MCF 10A (cell line): ENCODE measurements at regions of chr14 and their contacts with region 1.

Region 1: DNA sequence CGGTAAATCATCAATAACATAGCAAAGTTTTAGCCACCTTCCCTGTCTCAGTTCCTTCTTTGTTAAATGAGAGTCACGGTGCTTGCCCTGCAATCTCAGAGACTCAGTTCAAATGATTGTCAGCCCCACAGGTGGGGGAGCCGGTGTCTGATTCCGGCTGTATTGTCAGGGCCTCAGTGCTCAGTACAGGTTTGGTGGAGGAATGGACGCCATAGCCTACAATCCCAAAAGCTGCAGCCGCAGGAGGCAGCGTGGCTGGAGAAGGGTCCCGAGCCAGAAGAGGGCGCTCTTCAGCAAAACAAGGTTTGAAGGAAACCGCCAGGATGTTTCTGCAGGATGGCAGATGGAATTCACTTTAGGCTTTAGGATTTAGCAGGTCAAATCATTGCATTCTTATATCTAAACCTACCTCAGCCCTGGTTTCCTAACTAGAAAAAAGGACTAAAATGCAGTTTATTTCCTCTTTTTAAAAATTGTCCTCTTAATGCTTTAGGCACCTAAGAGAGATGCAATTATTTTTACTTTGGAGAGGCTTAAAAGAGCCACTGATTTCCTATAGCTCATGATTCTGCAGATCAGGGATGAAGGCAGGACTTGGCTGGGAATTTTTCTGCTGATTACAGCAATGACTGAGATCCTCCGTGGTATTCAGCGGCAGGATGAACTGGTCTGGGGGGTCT is 29.2 kb downstream of the FOS start:
- DNase-seq: peak; percentile 90
- H3K4me3 Mint-ChIP-seq: no peak overlapping the region
- H3K27ac Mint-ChIP-seq: peak overlapping the region; percentile 5
- H3K4me1 Mint-ChIP-seq: peaks cover 32% of the 10 kb centered on the region
- H3K27me3 Mint-ChIP-seq: no peaks in the 10 kb centered on the region
- CTCF ChIP-seq: peak; percentile 85

Region 2: DNA sequence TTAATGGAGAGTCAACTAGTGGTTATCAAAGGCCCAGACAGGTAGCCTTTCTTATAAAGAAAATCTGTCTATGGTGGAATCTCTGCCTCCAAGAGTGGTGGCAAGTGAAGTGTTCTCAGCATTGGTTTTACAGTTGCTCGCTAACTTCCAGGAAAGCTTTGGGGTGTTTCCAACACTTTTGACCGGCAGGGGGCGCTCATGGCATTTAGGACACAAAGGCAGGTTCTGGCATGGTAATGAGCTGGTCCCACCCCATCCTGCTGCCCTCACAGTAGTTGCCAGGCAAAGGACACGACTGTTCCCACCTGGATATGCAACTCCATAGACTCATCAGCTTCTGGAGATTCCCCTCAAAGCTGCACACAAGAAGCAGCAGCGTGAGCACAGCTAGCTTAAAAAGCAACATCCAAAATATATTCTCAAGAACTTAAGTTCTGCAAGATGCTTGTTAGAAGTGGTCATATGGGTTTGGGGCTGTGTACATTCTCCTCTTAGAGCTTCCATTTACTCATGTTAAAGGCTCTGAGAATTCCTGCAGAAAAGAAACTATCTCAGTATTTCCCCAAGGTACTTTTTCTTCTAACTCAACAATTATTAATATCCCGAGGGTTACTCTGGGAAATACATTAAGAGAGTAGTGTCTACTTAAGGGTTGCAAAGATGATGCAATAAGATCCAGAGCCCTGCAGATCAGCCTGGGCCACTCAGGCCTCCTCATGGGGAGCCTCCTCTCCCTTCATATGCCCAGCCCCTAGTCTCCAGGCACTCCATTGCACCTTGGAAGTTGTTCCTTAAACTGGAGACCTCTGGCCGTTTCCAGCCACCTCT is 446.7 kb before region 1 on chr14:
- CTCF ChIA-PET with region 1: interaction called, 3 read pairs
- POLR2A ChIA-PET with region 1: no interaction called
- intact Hi-C with region 1: loop called (anchors 5 kb)
- DNase-seq: peak; percentile 89
- H3K4me3 Mint-ChIP-seq: no peak overlapping the region
- H3K27ac Mint-ChIP-seq: no peak overlapping the region
- H3K4me1 Mint-ChIP-seq: no peaks in the 10 kb centered on the region
- H3K27me3 Mint-ChIP-seq: peaks cover 6% of the 10 kb centered on the region
- CTCF ChIP-seq: peak; percentile 64

Region 3: GRCh38 chr14:74945823-74946682 is 361.8 kb before region 1 on chr14:
- CTCF ChIA-PET with region 1: interaction called, 3 read pairs
- POLR2A ChIA-PET with region 1: no interaction called
- intact Hi-C with region 1: loop called (anchors 10 kb)
- DNase-seq: peak; percentile 78
- H3K4me3 Mint-ChIP-seq: peak overlapping the region; percentile 34
- H3K27ac Mint-ChIP-seq: peak overlapping the region; percentile 52
- H3K4me1 Mint-ChIP-seq: peaks cover 14% of the 10 kb centered on the region
- H3K27me3 Mint-ChIP-seq: no peaks in the 10 kb centered on the region
- CTCF ChIP-seq: peak; percentile 81

Region 4: GRCh38 chr14:75132382-75133086 is 175.3 kb before region 1 on chr14:
- CTCF ChIA-PET with region 1: interaction called, 192 read pairs
- POLR2A ChIA-PET with region 1: interaction called, 274 read pairs
- intact Hi-C with region 1: loop called (anchors 1 kb)
- DNase-seq: peak; percentile 83
- H3K4me3 Mint-ChIP-seq: no peak overlapping the region
- H3K27ac Mint-ChIP-seq: peak overlapping the region; percentile 77
- H3K4me1 Mint-ChIP-seq: peaks cover 33% of the 10 kb centered on the region
- H3K27me3 Mint-ChIP-seq: no peaks in the 10 kb centered on the region
- CTCF ChIP-seq: peak; percentile 67

Region 5: DNA sequence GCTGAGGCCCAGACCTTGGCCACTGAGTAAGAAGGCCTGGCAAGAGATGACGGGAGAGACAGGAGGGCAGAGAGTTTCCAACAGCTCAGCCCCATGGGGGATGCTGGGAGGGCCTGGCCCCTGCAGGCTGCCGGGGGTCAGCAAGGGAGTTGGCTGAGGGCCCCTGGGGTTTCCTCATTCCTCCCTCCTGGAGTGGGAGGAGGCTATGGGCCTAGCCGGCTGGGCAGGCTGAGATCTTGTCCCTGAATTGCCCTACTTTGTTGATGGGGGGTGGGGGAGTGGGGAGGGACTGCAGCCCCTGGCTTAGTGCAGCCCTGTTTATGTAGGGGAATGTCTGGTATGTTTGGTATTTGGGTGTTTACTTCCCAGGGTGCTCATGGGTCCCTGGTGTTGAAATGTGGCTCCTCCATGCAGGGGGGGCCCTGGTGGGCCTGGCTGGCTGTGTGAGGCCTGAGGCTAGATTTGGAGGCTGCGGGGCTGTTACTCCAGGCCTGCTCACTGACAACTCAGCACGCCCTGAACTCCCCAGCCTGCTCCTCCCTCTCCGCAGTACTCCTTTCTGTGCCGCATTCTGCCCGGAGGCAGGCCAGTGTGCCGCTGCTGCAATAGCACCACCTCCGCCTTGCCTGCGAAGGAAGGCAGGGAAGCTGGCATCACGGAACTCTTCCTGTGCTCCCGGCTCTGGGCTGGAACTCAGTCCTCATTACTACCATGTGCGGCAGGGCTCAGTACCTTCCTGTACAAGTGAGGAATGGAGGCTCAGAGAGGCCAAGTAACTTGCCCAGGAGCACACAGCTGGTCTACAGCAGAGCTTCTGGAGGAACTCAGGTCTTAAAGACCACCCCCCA is 145.3 kb after region 1 on chr14:
- CTCF ChIA-PET with region 1: interaction called, 46 read pairs
- POLR2A ChIA-PET with region 1: interaction called, 3 read pairs
- intact Hi-C with region 1: loop called (anchors 1 kb)
- DNase-seq: peak; percentile 91
- H3K4me3 Mint-ChIP-seq: peak overlapping the region; percentile 11
- H3K27ac Mint-ChIP-seq: peak overlapping the region; percentile 69
- H3K4me1 Mint-ChIP-seq: peaks cover 67% of the 10 kb centered on the region
- H3K27me3 Mint-ChIP-seq: no peaks in the 10 kb centered on the region
- CTCF ChIP-seq: no peak

Region 6: DNA sequence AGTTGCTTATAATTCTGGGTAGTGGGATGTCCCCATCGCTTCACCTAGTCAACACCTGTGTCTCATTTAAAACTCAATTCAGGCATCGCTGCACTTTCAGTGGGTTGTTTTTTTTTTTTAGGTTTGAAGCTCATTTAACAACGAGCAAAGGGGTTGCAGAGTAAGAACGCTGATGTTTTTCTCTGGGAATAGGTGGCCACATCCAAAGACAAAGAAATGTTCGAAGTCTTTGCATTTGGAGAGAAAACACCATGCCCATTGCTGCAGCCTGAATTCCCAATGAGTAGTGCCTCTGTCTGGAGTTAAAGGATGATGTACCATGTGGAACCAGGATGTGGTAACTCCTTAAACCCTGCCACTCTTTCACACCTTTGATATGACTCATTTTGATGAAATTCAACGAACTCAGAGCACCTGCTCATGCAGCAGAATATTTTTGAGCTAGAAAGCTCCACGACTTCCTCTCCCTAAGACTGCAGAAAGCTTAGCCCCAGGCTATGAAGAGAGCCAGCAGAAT is 179.4 kb after region 1 on chr14:
- CTCF ChIA-PET with region 1: interaction called, 177 read pairs
- POLR2A ChIA-PET with region 1: interaction called, 8 read pairs
- intact Hi-C with region 1: loop called (anchors 1 kb)
- DNase-seq: peak; percentile 72
- H3K4me3 Mint-ChIP-seq: no peak overlapping the region
- H3K27ac Mint-ChIP-seq: no peak overlapping the region
- H3K4me1 Mint-ChIP-seq: peaks cover 23% of the 10 kb centered on the region
- H3K27me3 Mint-ChIP-seq: no peaks in the 10 kb centered on the region
- CTCF ChIP-seq: no peak